Endothelial cell of umbilical vein (primary cell): ENCODE measurements at regions of chr3 and their contacts with region 1.

Region 1: DNA sequence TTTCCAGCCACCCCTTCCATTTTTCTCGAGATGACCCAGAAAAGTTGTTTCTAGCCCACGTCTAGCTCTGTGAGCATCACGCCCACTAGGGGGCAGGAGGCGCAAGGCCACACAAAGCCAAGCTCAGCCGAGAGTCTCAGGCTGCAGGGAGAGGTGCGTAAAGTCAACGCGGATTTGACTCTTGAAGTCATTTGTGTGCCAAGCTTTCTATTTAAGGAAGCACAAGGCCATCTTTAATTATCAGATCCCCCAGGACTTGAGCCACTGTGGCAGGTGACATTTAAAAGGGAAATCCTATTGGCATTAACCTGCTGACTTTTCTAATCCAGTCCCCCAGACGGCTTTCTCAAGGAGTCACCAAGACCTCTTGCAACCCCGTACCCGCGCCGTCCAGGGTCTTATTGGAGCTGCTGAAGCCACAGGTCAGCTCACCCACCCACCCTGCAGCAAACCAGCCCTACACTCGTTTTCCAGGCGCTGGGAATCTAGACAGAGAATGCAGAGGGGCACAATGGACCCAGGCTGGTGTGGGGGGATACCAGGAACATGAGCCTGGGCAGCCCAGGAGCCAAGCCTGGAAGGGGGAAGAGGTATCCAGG is 62.1 kb downstream of the CAPN7 start:
- DNase-seq: peak; percentile 79
- H3K4me3 ChIP-seq: no peak overlapping the region
- H3K27ac ChIP-seq: peak overlapping the region; percentile 98
- H3K4me1 ChIP-seq: peaks cover 24% of the 10 kb centered on the region
- H3K27me3 ChIP-seq: no peaks in the 10 kb centered on the region
- CTCF ChIP-seq: peak; percentile 92 to 97
- POLR2A ChIP-seq: no peak

Region 2: DNA sequence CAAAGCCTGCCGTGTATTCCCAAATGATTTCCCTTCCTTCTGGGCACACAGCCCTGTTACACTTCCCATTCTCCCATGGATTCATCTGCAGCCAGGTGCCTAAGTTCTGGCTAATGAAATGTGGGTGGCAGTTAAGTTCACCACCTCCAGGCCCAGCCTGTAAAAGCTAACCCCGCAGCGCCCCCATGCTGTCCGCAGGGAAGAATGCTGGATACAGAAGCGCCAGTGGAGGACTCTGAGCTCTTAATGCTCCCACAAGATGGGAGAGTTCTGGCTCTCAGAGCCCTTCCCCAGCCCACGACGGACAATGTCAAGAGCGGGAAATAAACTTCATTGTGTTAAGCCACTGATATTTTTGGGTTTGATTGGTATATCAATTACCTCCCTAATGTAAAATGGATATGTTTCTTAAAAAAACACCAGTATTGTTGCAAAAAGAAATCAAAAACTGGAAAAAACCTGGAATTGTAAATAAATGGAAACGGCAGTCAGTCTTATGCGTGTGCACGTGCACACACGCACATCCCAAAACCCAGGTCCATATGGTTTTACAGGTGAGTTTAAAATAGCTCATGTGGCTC is 487.1 kb before region 1 on chr3:
- CTCF ChIA-PET with region 1: no interaction called
- POLR2A ChIA-PET with region 1: no interaction called
- dilution Hi-C with region 1: no loop called
- intact Hi-C with region 1: no loop called
- DNase-seq: peak; percentile 62
- H3K4me3 ChIP-seq: no peak overlapping the region
- H3K27ac ChIP-seq: no peak overlapping the region
- H3K4me1 ChIP-seq: no peaks in the 10 kb centered on the region
- H3K27me3 ChIP-seq: peaks cover 6 to 14% of the 10 kb centered on the region in 2 experiments
- CTCF ChIP-seq: peak; percentile 63 to 74
- POLR2A ChIP-seq: no peak

Region 3: DNA sequence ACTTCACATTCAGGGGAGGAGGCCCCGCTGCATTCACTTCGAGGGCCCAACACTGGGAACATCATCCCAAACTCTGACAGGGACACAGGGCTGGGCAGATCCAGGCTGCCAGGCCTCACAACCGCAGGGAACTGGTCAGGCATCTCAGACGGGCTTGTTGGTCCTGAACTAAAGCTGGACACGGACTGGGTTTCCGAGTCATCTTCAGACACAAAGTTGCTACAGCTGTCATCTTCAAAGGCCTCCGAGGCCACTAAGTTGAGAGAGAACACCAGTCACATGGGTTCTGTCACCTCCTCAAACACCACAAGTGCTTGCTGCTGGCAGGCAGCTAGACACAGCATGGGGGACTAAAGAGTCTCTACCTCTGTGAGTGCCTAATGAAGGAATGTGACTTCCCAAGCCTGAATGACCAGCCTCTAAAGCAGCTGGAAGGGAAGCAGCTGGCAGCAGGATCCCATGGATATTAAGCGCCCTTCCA is 11.2 kb before region 1 on chr3:
- CTCF ChIA-PET with region 1: interaction called, 11 read pairs
- POLR2A ChIA-PET with region 1: interaction called, 4 read pairs
- dilution Hi-C with region 1: no loop called
- intact Hi-C with region 1: no loop called
- DNase-seq: no peak
- H3K4me3 ChIP-seq: no peak overlapping the region
- H3K27ac ChIP-seq: no peak overlapping the region
- H3K4me1 ChIP-seq: no peaks in the 10 kb centered on the region
- H3K27me3 ChIP-seq: no peaks in the 10 kb centered on the region
- CTCF ChIP-seq: no peak
- POLR2A ChIP-seq: peak; percentile 35

Region 4: GRCh38 chr3:15300323-15301078 is 32.4 kb after region 1 on chr3:
- CTCF ChIA-PET with region 1: interaction called, 23 read pairs
- POLR2A ChIA-PET with region 1: no interaction called
- dilution Hi-C with region 1: no loop called
- intact Hi-C with region 1: loop called (anchors 1 kb)
- DNase-seq: peak; percentile 94
- H3K4me3 ChIP-seq: no peak overlapping the region
- H3K27ac ChIP-seq: peak overlapping the region; percentile 75
- H3K4me1 ChIP-seq: peaks cover 41% of the 10 kb centered on the region
- H3K27me3 ChIP-seq: no peaks in the 10 kb centered on the region
- CTCF ChIP-seq: no peak
- POLR2A ChIP-seq: no peak

Region 5: DNA sequence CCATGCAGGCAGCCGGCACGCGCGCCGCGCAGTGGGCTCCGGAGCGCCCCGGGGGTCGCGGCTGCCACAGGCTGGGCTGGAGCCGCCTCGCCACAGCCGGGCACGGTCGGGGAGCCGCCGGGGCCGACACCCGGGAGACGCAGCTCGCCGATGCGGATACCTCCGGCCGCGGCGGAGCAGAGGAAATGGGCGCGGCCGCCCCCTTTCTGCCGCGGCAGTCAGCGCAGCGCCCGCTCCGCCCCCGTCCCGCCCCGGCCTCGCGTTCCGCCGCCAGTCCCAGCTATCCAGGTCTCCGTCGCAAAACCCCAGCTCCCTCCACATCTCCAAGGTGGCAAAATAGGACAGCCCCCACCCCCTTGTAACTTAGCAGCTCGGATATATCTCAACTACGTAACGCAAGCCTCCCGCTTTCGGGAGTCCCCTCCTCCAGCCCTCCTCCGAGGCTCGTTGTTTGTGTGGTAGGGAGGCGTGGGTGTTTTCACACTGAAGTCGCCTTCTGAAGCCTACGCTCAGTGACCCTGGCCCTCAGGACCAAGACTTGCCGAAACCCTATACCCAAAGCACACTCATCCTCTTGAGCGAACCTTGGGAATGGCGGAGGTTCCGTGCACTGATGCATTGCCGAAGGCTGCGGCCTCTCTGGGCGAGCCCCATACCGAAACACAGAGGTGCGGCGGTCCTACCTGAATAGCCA is 64.4 kb after region 1 on chr3 and contains the start of gene SH3BP5:
- CTCF ChIA-PET with region 1: interaction called, 185 read pairs
- POLR2A ChIA-PET with region 1: no interaction called
- dilution Hi-C with region 1: no loop called
- intact Hi-C with region 1: loop called (anchors 1 kb)
- DNase-seq: peak; percentile 68
- H3K4me3 ChIP-seq: peak within 1 kb of the TSS; percentile 91 to 93 (median 92)
- H3K27ac ChIP-seq: peak within 1 kb of the TSS; percentile 61
- H3K4me1 ChIP-seq: peaks cover 37% of the 10 kb centered on the region
- H3K27me3 ChIP-seq: no peaks in the 10 kb centered on the region
- CTCF ChIP-seq: peak; percentile 46 to 72
- POLR2A ChIP-seq: peak; percentile 83
- total RNA-seq, gene SH3BP5: 64.8 and 76.3 TPM in 2 replicates

Region 6: DNA sequence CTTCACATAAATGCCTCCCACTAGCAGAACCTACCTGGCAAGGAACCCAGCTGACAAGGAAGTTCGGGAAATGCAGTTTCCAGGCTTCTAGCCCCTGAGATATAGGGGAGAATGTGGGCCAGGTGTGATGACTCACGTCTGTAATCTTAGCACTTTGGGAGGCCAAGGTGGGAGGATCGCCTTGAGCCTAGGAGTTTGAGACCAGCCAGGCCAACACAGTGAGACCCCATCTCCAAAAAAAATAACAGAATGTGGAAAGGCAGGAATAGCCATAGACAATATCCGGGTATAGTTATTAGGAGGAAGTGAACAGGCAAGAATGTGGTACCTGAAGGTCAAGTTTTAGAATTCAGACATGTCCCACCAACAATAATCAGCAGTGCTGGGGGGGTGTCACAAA is 104.8 kb after region 1 on chr3:
- CTCF ChIA-PET with region 1: interaction called, 17 read pairs
- POLR2A ChIA-PET with region 1: no interaction called
- dilution Hi-C with region 1: loop called (anchors 5 kb)
- intact Hi-C with region 1: loop called (anchors 1 kb)
- DNase-seq: no peak
- H3K4me3 ChIP-seq: no peak overlapping the region
- H3K27ac ChIP-seq: no peak overlapping the region
- H3K4me1 ChIP-seq: peaks cover 13% of the 10 kb centered on the region
- H3K27me3 ChIP-seq: no peaks in the 10 kb centered on the region
- CTCF ChIP-seq: no peak
- POLR2A ChIP-seq: no peak

Region 7: DNA sequence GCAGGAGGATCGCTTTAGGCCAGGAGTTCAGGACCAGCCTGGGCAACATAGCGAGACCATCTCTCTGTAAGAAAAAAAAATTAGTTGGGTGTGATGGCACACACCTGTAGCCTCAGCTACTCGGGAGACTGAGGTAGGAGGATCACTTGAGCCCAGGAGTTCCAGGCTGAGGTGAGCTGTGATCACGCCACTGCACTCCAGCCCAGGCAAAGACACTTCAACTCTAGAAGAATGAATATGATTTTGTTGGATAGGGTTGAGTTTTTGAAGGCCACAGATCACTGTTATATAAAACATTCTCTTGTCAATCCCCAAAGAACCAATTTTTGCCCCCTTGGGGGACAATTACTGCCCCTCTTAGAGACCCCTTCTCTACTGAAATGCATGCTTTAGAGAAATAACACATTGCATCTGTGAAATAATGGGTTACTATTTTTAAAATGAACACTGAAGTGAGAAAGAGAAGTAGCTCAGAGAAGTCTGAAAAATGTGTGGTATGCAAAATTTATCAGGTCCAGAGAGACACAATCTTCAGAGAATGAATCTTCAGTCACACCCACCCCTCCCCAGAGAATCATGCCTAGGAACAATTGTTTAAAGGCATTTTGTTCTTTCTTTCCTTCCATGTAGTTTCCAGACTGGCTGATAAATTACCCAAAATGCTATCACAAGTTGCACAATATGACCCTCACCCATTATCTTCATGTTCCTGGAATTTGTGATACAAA is 116.5 kb after region 1 on chr3:
- CTCF ChIA-PET with region 1: interaction called, 67 read pairs
- POLR2A ChIA-PET with region 1: no interaction called
- dilution Hi-C with region 1: no loop called
- intact Hi-C with region 1: no loop called
- DNase-seq: no peak
- H3K4me3 ChIP-seq: no peak overlapping the region
- H3K27ac ChIP-seq: no peak overlapping the region
- H3K4me1 ChIP-seq: peaks cover 14% of the 10 kb centered on the region
- H3K27me3 ChIP-seq: no peaks in the 10 kb centered on the region
- CTCF ChIP-seq: no peak
- POLR2A ChIP-seq: no peak

Region 8: DNA sequence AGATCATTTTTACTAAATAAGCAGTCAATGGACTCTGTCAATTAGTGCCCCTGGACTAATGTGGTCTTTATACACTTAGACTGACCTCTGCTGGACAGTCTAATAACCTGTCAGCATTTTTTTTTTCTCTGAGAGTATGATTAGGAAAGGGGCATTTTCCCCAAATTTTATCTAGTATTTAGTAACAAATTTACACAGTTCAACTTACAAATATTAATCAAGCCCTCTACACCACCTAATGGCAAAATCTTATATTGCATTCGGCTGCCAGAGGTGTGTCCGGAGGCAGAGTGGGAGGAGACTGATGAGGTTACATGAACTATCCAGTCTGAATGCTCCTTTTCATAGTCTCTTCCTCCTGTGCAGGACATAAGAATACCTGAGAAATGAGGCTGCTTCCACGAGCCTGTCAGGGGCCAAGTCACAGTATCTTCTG is 289.4 kb after region 1 on chr3:
- CTCF ChIA-PET with region 1: interaction called, 15 read pairs
- POLR2A ChIA-PET with region 1: no interaction called
- dilution Hi-C with region 1: no loop called
- intact Hi-C with region 1: loop called (anchors 1 kb)
- DNase-seq: peak; percentile 93
- H3K4me3 ChIP-seq: no peak overlapping the region
- H3K27ac ChIP-seq: no peak overlapping the region
- H3K4me1 ChIP-seq: no peaks in the 10 kb centered on the region
- H3K27me3 ChIP-seq: no peaks in the 10 kb centered on the region
- CTCF ChIP-seq: peak; percentile 36 to 37
- POLR2A ChIP-seq: no peak